Activated T-helper 1 cell treated with anti-CD3 and anti-CD28 coated beads, Interleukin-12 subunit alpha, Interleukin-12 subunit beta, Interleukin-2, Interleukin-4 antibody, amounts not matched to agents 30 ng/mL and 10 ng/mL and 1 ng/mL, durations not matched to agents 14 hours and 24 hours and 36 hours (primary cell): ENCODE measurements at regions of chr3 and their contacts with region 1.

Region 1: DNA sequence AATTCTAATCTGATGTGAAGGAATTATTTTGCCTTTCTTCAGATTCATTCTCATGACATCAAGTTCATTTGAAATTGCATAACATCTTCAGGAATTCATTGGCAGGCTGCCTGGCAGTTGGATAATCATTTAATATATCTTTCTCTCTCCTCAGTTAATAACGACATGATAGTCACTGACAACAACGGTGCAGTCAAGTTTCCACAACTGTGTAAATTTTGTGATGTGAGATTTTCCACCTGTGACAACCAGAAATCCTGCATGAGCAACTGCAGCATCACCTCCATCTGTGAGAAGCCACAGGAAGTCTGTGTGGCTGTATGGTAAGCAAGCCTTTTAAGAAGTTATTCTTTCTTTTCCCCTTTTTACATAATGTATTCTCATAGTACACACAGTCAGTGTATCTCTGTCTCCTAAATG is 38.2 kb downstream of the TGFBR2 start:
- DNase-seq: peak; percentile 66
- H3K4me3 Mint-ChIP-seq: peak overlapping the region; percentile 57
- H3K27ac Mint-ChIP-seq: peak overlapping the region; percentile 94
- H3K4me1 Mint-ChIP-seq: peaks cover 93% of the 10 kb centered on the region
- H3K27me3 Mint-ChIP-seq: no peaks in the 10 kb centered on the region

Region 2: GRCh38 chr3:29711255-29711771 is 933.3 kb before region 1 on chr3:
- intact Hi-C with region 1: no loop called
- DNase-seq: no peak
- H3K4me3 Mint-ChIP-seq: no peak overlapping the region
- H3K27ac Mint-ChIP-seq: no peak overlapping the region
- H3K4me1 Mint-ChIP-seq: no peaks in the 10 kb centered on the region
- H3K27me3 Mint-ChIP-seq: peaks cover 2% of the 10 kb centered on the region

Region 3: DNA sequence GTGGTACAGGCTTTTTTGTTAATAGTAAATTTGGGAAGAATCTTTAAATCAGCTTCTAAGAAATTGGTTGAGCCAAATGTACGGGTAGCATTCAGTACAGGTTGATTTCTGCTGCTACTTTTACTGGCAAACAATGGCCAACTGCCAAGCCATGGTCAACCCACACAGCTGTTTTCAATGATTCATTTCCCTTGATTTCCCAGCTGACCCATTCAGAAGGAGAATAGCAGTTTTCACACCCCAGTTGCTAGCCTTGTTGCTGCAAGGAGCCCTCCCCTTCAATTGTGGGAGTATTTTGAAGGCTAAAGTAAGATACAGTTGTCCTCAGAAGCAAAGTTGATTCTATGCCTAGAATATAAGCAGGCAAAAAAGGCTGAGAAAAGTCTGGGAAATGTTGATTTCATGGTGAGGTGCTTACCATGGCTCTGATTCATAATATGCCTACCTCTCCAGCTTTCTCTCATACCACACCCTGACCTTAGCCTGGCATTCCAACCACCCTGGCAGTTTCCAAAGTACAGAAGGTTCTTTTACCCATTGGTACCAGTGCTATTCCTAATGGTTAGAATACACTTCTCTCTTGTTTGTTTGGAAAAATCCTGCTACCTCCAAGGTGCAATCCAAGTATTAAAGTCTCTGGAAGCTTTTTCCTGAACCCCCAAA is 358.5 kb before region 1 on chr3:
- intact Hi-C with region 1: loop called (anchors 5 kb)
- DNase-seq: no peak
- H3K4me3 Mint-ChIP-seq: no peak overlapping the region
- H3K27ac Mint-ChIP-seq: peak overlapping the region; percentile 3
- H3K4me1 Mint-ChIP-seq: peaks cover 57% of the 10 kb centered on the region
- H3K27me3 Mint-ChIP-seq: no peaks in the 10 kb centered on the region

Region 4: GRCh38 chr3:30623351-30623750 is 21.3 kb before region 1 on chr3:
- intact Hi-C with region 1: loop called (anchors 1 kb)
- DNase-seq: no peak
- H3K4me3 Mint-ChIP-seq: peak overlapping the region; percentile 66
- H3K27ac Mint-ChIP-seq: peak overlapping the region; percentile 90
- H3K4me1 Mint-ChIP-seq: peaks cover 83% of the 10 kb centered on the region
- H3K27me3 Mint-ChIP-seq: no peaks in the 10 kb centered on the region

Region 5: DNA sequence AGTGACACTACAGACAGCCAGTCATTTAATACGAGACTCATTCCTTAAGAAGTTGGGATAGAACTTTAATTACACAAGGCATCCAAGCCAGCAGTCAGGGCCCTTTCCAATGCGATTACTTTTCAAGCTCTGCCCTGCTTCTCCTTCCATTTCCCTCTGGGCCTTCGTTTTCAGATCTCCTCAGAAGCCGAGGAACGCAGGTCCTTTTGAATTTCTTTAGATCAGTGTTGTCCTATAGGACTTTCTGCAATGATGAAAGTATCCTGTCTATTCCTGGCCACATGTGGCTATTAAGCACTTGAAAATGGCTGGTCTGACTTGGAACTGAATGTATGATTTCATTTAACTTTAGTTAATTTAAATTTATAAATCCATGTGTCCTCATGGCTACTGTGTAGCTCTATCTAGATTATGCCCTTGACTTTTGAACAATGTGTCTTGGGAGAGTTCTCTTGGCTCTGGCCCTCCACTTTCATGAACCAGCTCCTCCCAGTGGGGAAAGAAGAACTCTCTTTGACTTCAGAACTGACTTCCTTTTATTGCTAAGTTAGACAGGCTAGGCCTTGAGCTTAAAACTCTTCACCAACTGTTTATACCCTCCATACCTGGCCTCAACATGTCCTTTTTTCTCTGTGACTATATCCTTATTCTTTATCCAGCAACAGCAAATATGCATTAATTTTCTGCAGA is 15.6 kb before region 1 on chr3:
- intact Hi-C with region 1: loop called (anchors 1 kb)
- DNase-seq: no peak
- H3K4me3 Mint-ChIP-seq: peak overlapping the region; percentile 66
- H3K27ac Mint-ChIP-seq: peak overlapping the region; percentile 98
- H3K4me1 Mint-ChIP-seq: peaks cover 83% of the 10 kb centered on the region
- H3K27me3 Mint-ChIP-seq: no peaks in the 10 kb centered on the region

Region 6: DNA sequence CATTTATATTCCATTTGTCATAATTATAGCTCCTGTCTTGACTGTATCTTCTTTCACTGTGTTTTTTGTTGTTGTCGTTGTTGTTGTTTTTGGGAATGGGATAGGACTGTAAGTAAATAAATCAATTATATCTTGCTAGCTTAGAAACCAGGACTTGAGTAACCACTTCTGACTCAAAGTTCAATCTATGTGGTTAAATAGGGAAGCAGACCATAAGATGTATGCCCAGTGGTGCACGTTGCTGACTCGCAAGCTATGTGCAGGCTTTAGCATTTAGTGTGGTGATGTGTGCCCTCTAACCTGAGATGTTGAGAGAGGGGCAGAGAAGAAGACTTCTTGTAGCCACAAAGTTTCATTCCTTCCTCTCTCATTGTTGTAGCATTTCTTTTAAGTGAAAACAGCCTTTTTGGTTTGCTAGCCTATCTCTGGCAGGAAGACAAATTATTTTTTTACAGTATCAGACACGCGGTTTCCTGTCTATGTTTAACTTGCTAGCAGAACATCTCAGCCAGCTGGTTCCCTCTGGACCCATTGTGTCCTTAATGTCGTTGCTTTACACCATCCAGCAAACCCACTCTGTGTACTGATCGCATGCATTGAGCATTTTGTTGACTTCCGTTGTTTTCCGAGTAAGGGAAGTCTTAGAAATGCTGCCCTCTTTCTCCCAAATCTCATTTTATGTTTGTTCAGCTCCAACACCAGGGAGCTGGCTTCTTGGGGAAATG is 13.9 kb after region 1 on chr3:
- intact Hi-C with region 1: loop called (anchors 1 kb)
- DNase-seq: no peak
- H3K4me3 Mint-ChIP-seq: peak overlapping the region; percentile 85
- H3K27ac Mint-ChIP-seq: peak overlapping the region; percentile 96
- H3K4me1 Mint-ChIP-seq: peaks cover 97% of the 10 kb centered on the region
- H3K27me3 Mint-ChIP-seq: no peaks in the 10 kb centered on the region

Region 7: GRCh38 chr3:30667280-30667651 is 22.7 kb after region 1 on chr3:
- intact Hi-C with region 1: loop called (anchors 1 kb)
- DNase-seq: peak; percentile 39
- H3K4me3 Mint-ChIP-seq: no peak overlapping the region
- H3K27ac Mint-ChIP-seq: peak overlapping the region; percentile 83
- H3K4me1 Mint-ChIP-seq: peaks cover 97% of the 10 kb centered on the region
- H3K27me3 Mint-ChIP-seq: no peaks in the 10 kb centered on the region

Region 8: DNA sequence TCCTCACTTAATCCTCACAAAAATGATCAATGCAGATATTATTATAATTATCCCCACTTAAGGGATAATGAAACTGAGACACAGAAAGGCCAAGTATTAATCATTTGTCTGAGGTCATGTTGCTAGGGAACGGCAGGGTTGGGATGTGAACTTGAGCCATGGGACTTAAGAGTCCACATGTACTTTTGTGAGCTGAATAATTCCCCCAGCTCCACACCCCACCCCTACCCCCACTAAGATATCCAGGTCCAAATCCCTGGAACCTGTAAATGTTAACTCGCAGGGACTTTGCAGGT is 540.4 kb after region 1 on chr3:
- intact Hi-C with region 1: no loop called
- DNase-seq: no peak
- H3K4me3 Mint-ChIP-seq: no peak overlapping the region
- H3K27ac Mint-ChIP-seq: no peak overlapping the region
- H3K4me1 Mint-ChIP-seq: no peaks in the 10 kb centered on the region
- H3K27me3 Mint-ChIP-seq: no peaks in the 10 kb centered on the region

Region 9: DNA sequence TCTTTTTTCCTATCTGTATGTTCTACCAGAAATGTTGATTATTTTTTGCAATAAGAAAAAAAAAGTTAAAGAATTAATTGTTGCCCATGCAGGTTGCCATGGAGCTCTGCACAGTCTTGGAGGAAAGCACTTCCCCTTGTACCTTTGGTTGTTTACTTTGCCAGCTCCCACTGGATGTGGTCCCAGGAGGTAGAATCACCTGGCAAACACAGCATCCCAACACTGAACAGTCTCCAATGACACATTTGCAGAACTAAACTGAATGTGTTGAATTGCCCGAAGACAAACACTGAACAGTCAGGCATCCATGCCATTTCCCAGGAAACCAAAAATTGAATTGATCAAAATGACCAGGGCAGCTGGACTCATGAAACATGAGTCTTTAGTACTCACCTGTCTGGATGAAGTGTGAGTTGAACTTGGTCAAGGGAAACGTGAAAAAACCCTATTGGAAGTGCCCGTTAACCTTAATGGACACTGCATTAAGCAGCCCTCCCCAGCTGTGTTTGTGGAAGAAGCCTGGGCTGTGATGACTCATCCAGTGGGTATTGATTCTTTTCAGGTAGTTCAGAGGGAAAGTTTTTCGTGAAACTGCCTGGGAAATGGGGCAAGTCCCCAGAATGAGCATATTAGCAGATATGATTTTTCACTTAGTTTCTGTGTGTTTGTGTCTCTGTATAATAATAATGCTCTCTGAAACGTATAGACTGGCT is 603.4 kb after region 1 on chr3:
- intact Hi-C with region 1: loop called (anchors 5 kb)
- DNase-seq: no peak
- H3K4me3 Mint-ChIP-seq: no peak overlapping the region
- H3K27ac Mint-ChIP-seq: peak overlapping the region; percentile 75
- H3K4me1 Mint-ChIP-seq: peaks cover 51% of the 10 kb centered on the region
- H3K27me3 Mint-ChIP-seq: no peaks in the 10 kb centered on the region